Heart left ventricle (tissue), 16 donors: ENCODE measurements at regions of chr5 and their contacts with region 1.

Region 1: GRCh38 chr5:142938266-142938880 is 168.2 kb downstream of the ARHGAP26 start:
- DNase-seq: no peak
- ATAC-seq: peak in 2 of 4 donors; percentile 46 to 64
- H3K4me3 ChIP-seq: no peak overlapping the region
- H3K27ac ChIP-seq: peak overlapping the region in 9 of 12 donors; percentile 3 to 45 (median 28)
- H3K4me1 ChIP-seq: peaks cover 0 to 78% (median 41%) of the 10 kb centered on the region in 12 donors
- H3K27me3 ChIP-seq: no peaks in the 10 kb centered on the region
- CTCF ChIP-seq: no peak
- POLR2A ChIP-seq: no peak

Region 2: GRCh38 chr5:142860270-142860669 is 78.1 kb before region 1 on chr5:
- intact Hi-C with region 1: no loop called
- DNase-seq: peak in 1 of 5 donors; percentile 54
- ATAC-seq: peak; percentile 35 to 80 (median 58)
- H3K4me3 ChIP-seq: no peak overlapping the region
- H3K27ac ChIP-seq: peak overlapping the region in 9 of 12 donors; percentile 6 to 47 (median 26)
- H3K4me1 ChIP-seq: peaks cover 0 to 88% (median 61%) of the 10 kb centered on the region in 12 donors
- H3K27me3 ChIP-seq: no peaks in the 10 kb centered on the region
- CTCF ChIP-seq: no peak
- POLR2A ChIP-seq: no peak

Region 3: DNA sequence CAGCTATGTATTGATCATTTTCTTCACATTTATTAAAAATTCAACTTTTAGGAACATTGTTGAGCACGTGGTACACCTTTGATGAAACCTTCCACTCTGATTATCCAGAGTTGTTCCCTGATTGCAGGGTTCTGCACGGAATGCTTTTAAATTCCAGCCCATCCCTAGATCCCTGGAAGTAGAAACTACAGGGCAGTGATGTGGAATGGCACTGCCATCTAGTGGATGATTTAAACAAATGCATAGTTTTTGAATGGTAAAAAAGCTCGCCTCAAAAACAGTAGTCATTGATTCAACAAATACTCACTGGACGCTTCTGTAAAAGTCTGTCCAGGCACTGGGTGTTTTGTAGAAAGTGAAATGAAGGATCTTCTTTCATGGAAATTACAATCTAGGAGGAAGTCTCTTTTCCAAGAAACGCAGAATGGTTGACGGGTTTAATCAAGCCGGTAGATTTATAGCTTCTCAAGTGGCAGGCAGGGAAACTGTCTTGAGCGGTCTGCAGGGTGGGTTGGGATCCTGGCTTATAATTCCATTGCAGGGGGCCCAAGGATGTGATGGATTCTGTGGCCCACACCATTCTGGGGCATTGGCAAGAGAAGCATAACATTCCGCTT is 49.8 kb before region 1 on chr5:
- intact Hi-C with region 1: no loop called
- DNase-seq: no peak
- ATAC-seq: peak; percentile 21 to 66 (median 60)
- H3K4me3 ChIP-seq: no peak overlapping the region
- H3K27ac ChIP-seq: no peak overlapping the region
- H3K4me1 ChIP-seq: peaks cover 0 to 47% (median 18%) of the 10 kb centered on the region in 12 donors
- H3K27me3 ChIP-seq: no peaks in the 10 kb centered on the region
- CTCF ChIP-seq: peak; percentile 68 to 87 (median 79)
- POLR2A ChIP-seq: no peak

Region 4: DNA sequence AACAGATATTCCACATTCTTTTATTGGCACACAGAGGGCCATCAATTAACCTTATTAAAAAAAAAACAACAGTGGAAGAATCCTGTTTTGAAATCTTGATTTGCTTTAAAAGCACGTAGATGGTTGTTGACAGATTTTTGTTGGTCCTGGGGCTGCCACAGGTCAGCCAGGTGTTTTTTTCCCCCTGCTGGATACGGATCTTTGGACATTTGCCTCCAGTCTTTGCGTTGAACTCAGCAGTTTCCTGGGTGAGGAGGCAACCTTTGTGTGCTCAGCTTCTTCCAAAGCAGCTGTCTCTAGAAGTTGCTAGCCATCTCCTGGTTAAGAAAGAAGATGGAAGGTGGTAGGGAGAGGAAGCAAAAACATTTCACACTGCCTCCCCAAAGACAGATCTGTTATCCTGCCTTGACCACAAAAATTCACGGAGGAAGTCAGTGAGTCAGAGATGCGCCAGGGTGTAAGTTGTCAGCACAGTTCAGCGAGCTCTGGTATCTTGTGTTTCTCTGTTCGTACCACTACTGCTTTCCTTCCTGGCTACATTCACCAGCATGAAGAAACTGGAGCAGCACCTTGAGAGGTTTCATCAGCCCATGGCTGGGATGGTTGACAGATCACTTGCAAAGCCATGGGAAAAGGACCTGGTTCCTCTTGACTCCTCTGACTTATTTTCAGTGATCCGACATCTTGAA is 39.1 kb after region 1 on chr5:
- intact Hi-C with region 1: no loop called
- DNase-seq: peak in 1 of 5 donors; percentile 27
- ATAC-seq: peak in 2 of 4 donors; percentile 23 to 36
- H3K4me3 ChIP-seq: no peak overlapping the region
- H3K27ac ChIP-seq: peak overlapping the region in 3 of 12 donors; percentile 20 to 79 (median 27)
- H3K4me1 ChIP-seq: peaks cover 10 to 92% (median 32%) of the 10 kb centered on the region in 12 donors
- H3K27me3 ChIP-seq: no peaks in the 10 kb centered on the region
- CTCF ChIP-seq: no peak
- POLR2A ChIP-seq: no peak

Region 5: DNA sequence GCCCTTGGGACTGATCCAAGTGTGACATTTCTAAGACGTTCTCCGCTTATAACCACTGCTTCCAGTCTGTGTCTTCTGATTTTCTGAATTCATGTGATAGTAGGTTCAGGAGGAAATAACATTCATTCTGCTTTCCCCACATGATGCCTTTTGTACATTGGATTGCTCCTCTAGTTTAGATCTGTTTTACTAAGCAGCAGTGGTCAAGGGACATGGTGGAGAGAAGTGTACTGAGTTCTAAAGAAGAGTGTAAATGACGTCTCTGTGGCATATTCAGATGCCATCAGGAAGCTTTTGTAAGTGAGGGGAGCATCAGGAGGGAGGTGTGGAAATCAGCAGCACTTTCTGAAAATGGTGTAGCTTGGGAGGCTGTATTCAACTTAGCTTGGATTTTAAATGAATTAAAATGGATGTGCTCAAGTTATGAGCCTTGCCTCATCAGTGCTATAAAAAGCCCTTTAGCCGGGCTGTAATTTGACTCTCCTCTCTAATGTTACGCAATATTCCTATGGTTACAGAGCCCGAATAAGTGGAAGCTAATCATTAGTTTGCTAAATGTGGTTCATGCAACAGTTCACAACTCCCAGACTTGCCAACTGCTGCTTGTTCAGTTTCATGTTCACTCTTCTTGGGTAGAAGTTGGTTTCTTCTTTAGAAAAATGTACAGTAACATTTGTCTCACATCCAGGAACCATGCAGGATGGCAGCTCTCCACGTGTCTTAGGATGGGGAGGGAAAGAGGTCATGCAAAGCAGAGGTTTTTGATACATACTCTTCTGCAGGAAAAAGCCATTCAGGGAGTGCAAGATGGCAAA is 113.1 kb after region 1 on chr5:
- intact Hi-C with region 1: no loop called
- DNase-seq: peak in 2 of 5 donors; percentile 38 to 45
- ATAC-seq: peak; percentile 94 to 97 (median 96)
- H3K4me3 ChIP-seq: peak overlapping the region in 1 of 12 donors; percentile 1
- H3K27ac ChIP-seq: peak overlapping the region; percentile 54 to 89 (median 79)
- H3K4me1 ChIP-seq: peaks cover 0 to 50% (median 30%) of the 10 kb centered on the region in 12 donors
- H3K27me3 ChIP-seq: no peaks in the 10 kb centered on the region
- CTCF ChIP-seq: no peak
- POLR2A ChIP-seq: no peak

Region 6: GRCh38 chr5:143213851-143214363 is 275.5 kb after region 1 on chr5:
- intact Hi-C with region 1: loop called in 1 of 10 experiments (anchors 10 kb)
- DNase-seq: no peak
- ATAC-seq: peak in 2 of 4 donors; percentile 26 to 62
- H3K4me3 ChIP-seq: no peak overlapping the region
- H3K27ac ChIP-seq: peak overlapping the region in 10 of 12 donors; percentile 32 to 79 (median 63)
- H3K4me1 ChIP-seq: peaks cover 0 to 64% (median 27%) of the 10 kb centered on the region in 12 donors
- H3K27me3 ChIP-seq: no peaks in the 10 kb centered on the region
- CTCF ChIP-seq: no peak
- POLR2A ChIP-seq: no peak